GM12878 (cell line): ENCODE measurements at regions of chr11 and their contacts with region 1.

Region 1: DNA sequence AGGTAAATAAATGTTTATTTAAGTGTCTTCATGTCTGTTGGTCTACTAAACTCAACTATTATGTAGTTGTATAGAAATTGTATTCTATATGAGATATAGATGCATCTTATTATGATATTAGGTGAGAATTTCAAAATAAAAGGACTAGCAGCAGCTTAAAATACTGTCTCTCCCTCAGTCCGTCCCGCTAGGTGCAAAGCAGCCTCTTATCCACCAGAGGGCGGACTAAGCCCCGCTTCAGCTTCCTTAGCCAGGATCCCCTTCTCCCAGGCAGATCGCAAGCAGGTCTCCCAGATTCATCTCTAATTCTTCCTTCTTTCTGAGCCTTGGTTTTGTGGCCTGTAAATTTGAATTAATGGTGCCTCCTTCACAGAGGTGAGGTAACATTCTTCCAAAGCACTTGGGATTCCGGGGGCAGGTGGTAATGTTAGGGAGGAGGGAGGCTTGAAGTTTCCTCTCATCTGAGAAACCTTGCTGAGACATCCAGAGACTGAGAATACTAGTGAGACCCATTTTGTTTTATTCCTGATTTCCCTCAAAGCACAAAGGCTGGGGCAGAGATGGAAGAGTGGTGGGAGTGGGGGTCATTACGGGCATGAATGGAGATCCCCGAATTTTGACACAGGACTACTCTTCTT is 13.5 kb upstream of the INSC start:
- DNase-seq: no peak
- ATAC-seq: peak; percentile 94
- H3K4me3 ChIP-seq: no peak overlapping the region
- H3K27ac ChIP-seq: no peak overlapping the region
- H3K4me1 ChIP-seq: no peaks in the 10 kb centered on the region
- H3K27me3 ChIP-seq: no peaks in the 10 kb centered on the region
- CTCF ChIP-seq: peak; percentile 79 to 92 (median 89)
- EP300 ChIP-seq: no peak
- POLR2A ChIP-seq: no peak
- RAD21 ChIP-seq: peak; percentile 85

Region 2: DNA sequence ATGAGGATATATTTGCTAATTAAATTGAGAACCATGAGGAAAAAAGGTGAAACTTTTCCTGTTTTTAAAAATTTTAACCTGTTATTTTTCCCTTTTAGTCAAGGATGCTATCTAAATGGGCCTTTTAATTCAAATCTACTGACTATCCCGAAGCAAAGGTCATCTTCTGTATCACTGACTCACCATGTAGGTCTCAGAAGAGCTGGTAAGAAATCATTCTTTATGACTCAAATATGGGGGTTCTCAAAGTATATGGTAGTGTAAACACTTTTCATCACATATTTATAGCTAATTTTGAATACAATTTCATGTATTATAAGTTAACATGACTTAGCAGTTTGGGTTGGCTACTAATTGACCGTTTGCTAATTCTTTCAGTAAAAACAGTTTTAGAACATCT is 297.3 kb before region 1 on chr11:
- CTCF ChIA-PET with region 1: no interaction called
- POLR2A ChIA-PET with region 1: no interaction called
- RAD21 ChIA-PET with region 1: no interaction called
- SMC1A ChIA-PET with region 1: no interaction called
- in situ Hi-C with region 1: no loop called
- intact Hi-C with region 1: no loop called
- DNase-seq: no peak
- ATAC-seq: no peak
- H3K4me3 ChIP-seq: no peak overlapping the region
- H3K27ac ChIP-seq: no peak overlapping the region
- H3K4me1 ChIP-seq: no peaks in the 10 kb centered on the region
- H3K27me3 ChIP-seq: no peaks in the 10 kb centered on the region
- CTCF ChIP-seq: no peak
- EP300 ChIP-seq: no peak
- POLR2A ChIP-seq: no peak
- RAD21 ChIP-seq: no peak

Region 3: DNA sequence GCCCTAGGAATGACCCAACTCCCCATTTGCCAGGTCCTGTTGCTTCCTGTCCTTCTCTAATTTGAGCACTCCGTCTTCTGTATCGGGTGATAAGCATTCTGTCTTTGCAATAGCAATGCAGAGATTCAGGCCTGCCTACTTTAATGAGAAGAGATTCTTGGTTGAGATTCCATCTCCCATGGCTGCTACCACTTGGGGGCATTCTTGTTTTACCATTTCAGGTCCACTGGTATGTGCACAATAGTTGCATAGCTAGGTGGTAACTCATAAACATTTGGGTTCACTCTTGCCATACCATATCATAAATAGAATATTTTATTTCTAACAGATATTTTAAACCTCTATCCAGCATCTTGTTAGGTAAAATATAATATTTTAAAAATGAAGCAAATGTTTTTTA is 62.2 kb before region 1 on chr11:
- CTCF ChIA-PET with region 1: no interaction called
- POLR2A ChIA-PET with region 1: no interaction called
- RAD21 ChIA-PET with region 1: no interaction called
- SMC1A ChIA-PET with region 1: no interaction called
- in situ Hi-C with region 1: no loop called
- intact Hi-C with region 1: no loop called
- DNase-seq: no peak
- ATAC-seq: no peak
- H3K4me3 ChIP-seq: no peak overlapping the region
- H3K27ac ChIP-seq: no peak overlapping the region
- H3K4me1 ChIP-seq: no peaks in the 10 kb centered on the region
- H3K27me3 ChIP-seq: no peaks in the 10 kb centered on the region
- CTCF ChIP-seq: no peak; a peak in 1 of 6 replicates
- EP300 ChIP-seq: no peak
- POLR2A ChIP-seq: no peak
- RAD21 ChIP-seq: no peak

Region 4: DNA sequence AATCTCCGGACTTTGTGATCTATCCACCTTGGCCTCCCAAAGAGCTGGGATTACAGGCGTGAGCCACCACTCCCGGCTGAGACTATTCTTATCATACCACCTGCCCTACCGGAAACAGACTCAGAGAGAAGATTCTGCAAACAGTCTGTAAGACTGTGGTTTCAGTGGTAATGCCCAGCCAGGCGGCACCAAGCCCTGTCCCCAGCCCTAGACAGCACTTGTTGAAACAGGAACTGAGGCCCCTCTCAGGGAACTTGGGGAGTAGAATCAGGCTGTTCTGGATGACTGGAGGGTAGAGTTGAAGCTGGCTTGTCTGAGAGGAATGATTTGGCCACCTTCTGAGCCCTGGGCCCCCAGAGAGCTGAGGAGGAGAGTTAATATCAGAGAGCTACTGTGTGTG is 12.2 kb after region 1 on chr11:
- CTCF ChIA-PET with region 1: interaction called, 33 read pairs
- POLR2A ChIA-PET with region 1: no interaction called
- RAD21 ChIA-PET with region 1: interaction called, 5 read pairs
- SMC1A ChIA-PET with region 1: interaction called, 23 read pairs
- in situ Hi-C with region 1: no loop called
- intact Hi-C with region 1: no loop called
- DNase-seq: peak; percentile 73
- ATAC-seq: peak; percentile 94
- H3K4me3 ChIP-seq: no peak overlapping the region
- H3K27ac ChIP-seq: no peak overlapping the region
- H3K4me1 ChIP-seq: peaks cover 23% of the 10 kb centered on the region
- H3K27me3 ChIP-seq: no peaks in the 10 kb centered on the region
- CTCF ChIP-seq: no peak
- EP300 ChIP-seq: no peak
- POLR2A ChIP-seq: no peak
- RAD21 ChIP-seq: no peak

Region 5: GRCh38 chr11:15139958-15140659 is 38.9 kb after region 1 on chr11:
- CTCF ChIA-PET with region 1: interaction called, 13 read pairs
- POLR2A ChIA-PET with region 1: no interaction called
- RAD21 ChIA-PET with region 1: interaction called, 3 read pairs
- SMC1A ChIA-PET with region 1: interaction called, 4 read pairs
- in situ Hi-C with region 1: no loop called
- intact Hi-C with region 1: no loop called
- DNase-seq: no peak
- ATAC-seq: no peak
- H3K4me3 ChIP-seq: no peak overlapping the region
- H3K27ac ChIP-seq: no peak overlapping the region
- H3K4me1 ChIP-seq: no peaks in the 10 kb centered on the region
- H3K27me3 ChIP-seq: no peaks in the 10 kb centered on the region; a peak in 1 of 4 replicates
- CTCF ChIP-seq: no peak
- EP300 ChIP-seq: no peak
- POLR2A ChIP-seq: no peak
- RAD21 ChIP-seq: no peak

Region 6: DNA sequence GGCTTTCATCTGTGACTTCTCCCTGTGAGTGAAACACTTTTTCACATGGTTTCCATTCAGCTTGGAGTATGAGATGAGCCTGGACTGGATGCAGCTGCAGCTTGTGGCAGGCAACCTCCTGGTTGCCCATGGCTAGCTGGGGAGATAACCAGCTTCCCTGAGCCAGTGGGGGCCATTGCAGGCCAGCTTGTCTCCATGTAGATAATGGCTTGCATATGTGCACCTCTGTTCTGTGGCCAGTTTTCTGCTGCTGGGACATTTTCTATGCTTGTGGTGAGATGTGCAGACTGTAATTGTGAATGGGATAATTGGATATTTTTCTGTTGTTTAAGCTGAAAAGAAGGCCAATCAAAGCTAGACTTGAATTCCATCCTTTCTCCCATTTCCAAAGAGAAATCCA is 52.0 kb after region 1 on chr11:
- CTCF ChIA-PET with region 1: interaction called, 102 read pairs
- POLR2A ChIA-PET with region 1: no interaction called
- RAD21 ChIA-PET with region 1: interaction called, 14 read pairs
- SMC1A ChIA-PET with region 1: interaction called, 6 read pairs
- in situ Hi-C with region 1: loop called (anchors 5 kb)
- intact Hi-C with region 1: no loop called
- DNase-seq: no peak
- ATAC-seq: no peak
- H3K4me3 ChIP-seq: no peak overlapping the region
- H3K27ac ChIP-seq: no peak overlapping the region
- H3K4me1 ChIP-seq: no peaks in the 10 kb centered on the region
- H3K27me3 ChIP-seq: no peaks in the 10 kb centered on the region
- CTCF ChIP-seq: no peak
- EP300 ChIP-seq: no peak
- POLR2A ChIP-seq: no peak
- RAD21 ChIP-seq: no peak

Region 7: GRCh38 chr11:15159085-15159484 is 57.9 kb after region 1 on chr11:
- CTCF ChIA-PET with region 1: interaction called, 102 read pairs
- POLR2A ChIA-PET with region 1: no interaction called
- RAD21 ChIA-PET with region 1: interaction called, 14 read pairs
- SMC1A ChIA-PET with region 1: interaction called, 18 read pairs
- in situ Hi-C with region 1: loop called (anchors 5 kb)
- intact Hi-C with region 1: loop called (anchors 1 kb)
- DNase-seq: no peak
- ATAC-seq: peak; percentile 94
- H3K4me3 ChIP-seq: no peak overlapping the region
- H3K27ac ChIP-seq: no peak overlapping the region
- H3K4me1 ChIP-seq: no peaks in the 10 kb centered on the region
- H3K27me3 ChIP-seq: no peaks in the 10 kb centered on the region
- CTCF ChIP-seq: peak; percentile 37 to 56 (median 53); a peak in 5 of 6 replicates
- EP300 ChIP-seq: no peak
- POLR2A ChIP-seq: no peak
- RAD21 ChIP-seq: peak; percentile 46; the same call in 1 of the 2 replicates

Region 8: DNA sequence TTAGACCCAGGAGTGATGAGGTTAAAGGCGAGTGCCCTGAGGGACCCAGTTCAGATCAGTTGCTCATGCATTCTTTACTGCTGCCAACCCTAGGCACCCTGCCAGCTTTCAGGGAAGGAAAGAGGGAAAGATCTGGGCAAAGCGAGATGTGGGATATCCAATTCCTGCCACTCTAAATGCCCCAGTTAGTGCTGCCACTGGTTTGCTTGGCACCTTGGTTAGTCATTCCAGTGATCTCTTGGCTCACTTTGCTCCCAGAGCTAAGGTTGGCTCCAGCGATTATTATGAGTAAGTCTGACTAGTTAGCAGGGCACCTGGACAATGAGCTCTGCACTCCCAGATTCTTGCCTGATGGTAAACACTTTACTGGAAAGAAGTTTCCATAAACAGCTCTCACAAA is 98.5 kb after region 1 on chr11:
- CTCF ChIA-PET with region 1: interaction called, 73 read pairs
- POLR2A ChIA-PET with region 1: no interaction called
- RAD21 ChIA-PET with region 1: no interaction called
- SMC1A ChIA-PET with region 1: interaction called, 4 read pairs
- in situ Hi-C with region 1: loop called (anchors 5 kb)
- intact Hi-C with region 1: no loop called
- DNase-seq: no peak
- ATAC-seq: no peak
- H3K4me3 ChIP-seq: no peak overlapping the region
- H3K27ac ChIP-seq: no peak overlapping the region
- H3K4me1 ChIP-seq: no peaks in the 10 kb centered on the region
- H3K27me3 ChIP-seq: no peaks in the 10 kb centered on the region
- CTCF ChIP-seq: no peak
- EP300 ChIP-seq: no peak
- POLR2A ChIP-seq: no peak
- RAD21 ChIP-seq: no peak

Region 9: GRCh38 chr11:15208378-15209222 is 107.4 kb after region 1 on chr11:
- CTCF ChIA-PET with region 1: interaction called, 73 read pairs
- POLR2A ChIA-PET with region 1: no interaction called
- RAD21 ChIA-PET with region 1: interaction called, 17 read pairs
- SMC1A ChIA-PET with region 1: interaction called, 22 read pairs
- in situ Hi-C with region 1: no loop called
- intact Hi-C with region 1: loop called (anchors 1 kb)
- DNase-seq: no peak
- ATAC-seq: peak; percentile 100
- H3K4me3 ChIP-seq: no peak overlapping the region
- H3K27ac ChIP-seq: no peak overlapping the region
- H3K4me1 ChIP-seq: no peaks in the 10 kb centered on the region
- H3K27me3 ChIP-seq: no peaks in the 10 kb centered on the region
- CTCF ChIP-seq: peak; percentile 84 to 97 (median 92)
- EP300 ChIP-seq: no peak
- POLR2A ChIP-seq: no peak
- RAD21 ChIP-seq: peak; percentile 92